GM13977 (cell line): ENCODE measurements at regions of chr4 and their contacts with region 1.

Region 1: DNA sequence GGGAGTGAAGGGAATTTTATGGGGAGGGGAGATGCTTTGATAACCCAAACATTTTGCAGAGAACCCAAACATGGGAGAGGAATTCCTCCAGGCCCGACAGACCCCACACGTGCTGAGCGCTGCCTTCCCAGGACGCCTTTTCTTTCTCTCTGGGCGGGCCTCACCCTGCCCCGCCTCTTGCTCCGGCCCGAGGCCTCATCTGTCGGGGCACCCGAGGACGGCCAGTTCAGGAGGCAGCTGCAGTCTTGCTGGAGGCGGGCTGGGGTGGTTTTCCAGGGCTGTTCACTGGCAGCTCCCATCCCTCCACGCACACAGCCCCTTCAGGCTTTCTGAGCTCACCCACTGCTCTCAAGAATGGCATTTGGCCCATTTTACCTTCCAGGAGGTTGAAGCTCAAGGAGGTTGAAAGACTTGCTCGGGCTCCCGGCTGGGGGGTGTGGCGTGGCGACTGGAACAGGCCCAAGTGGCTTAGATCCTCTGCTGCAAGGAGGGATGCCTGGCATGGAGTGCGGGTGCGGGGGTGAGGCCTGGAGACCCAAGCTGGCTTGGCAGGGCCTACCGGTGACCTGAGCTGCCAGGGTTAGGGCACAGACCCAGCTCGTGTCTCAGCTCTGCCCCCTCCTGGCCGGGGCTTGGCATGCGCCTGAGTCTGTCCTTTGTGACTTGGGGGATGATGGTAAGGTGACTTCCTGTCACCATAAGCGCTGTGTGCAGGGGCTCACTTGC is 99.2 kb downstream of the PSAPL1 start:
- DNase-seq: peak; percentile 77
- CTCF ChIP-seq: peak; percentile 75

Region 2: GRCh38 chr4:7058792-7059191 is 276.7 kb before region 1 on chr4:
- in situ Hi-C with region 1: no loop called
- DNase-seq: no peak
- CTCF ChIP-seq: no peak

Region 3: DNA sequence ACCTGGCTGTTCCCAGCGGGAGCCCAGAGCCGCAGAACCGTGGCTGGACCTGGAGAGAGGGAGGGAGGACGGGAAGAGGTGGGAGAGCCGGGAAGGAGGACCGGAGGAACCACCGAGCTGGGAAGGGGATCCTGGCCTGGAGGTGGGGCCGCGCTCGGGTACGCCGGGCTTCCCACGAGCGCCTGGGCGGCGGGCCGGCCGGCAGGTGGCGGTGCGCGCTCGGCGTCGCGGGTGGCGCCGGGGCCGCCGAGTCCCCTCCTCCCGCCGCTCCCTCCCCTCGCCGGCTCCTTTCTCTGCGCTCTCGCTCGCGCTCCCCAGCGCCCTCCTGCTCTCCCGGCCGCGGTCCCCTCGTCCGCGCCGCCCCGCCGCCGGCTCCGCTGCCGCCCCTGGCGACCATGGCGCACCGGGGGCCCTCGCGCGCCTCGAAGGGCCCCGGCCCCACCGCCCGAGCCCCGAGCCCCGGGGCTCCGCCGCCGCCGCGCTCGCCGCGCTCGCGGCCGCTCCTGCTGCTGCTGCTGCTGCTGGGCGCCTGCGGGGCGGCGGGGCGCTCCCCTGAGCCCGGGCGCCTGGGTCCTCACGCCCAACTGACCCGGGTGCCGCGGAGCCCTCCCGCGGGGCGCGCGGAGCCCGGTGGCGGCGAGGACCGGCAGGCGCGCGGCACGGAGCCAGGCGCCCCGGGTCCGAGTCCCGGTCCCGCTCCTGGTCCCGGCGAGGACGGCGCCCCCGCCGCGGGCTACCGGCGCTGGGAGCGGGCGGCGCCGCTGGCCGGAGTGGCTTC is 143.1 kb before region 1 on chr4 and contains the start of gene SORCS2:
- in situ Hi-C with region 1: loop called (anchors 10 kb)
- DNase-seq: peak; percentile 86
- CTCF ChIP-seq: peak; percentile 72